ENCODE measurements at regions of chr11 and their contacts with region 1.

Region 1: DNA sequence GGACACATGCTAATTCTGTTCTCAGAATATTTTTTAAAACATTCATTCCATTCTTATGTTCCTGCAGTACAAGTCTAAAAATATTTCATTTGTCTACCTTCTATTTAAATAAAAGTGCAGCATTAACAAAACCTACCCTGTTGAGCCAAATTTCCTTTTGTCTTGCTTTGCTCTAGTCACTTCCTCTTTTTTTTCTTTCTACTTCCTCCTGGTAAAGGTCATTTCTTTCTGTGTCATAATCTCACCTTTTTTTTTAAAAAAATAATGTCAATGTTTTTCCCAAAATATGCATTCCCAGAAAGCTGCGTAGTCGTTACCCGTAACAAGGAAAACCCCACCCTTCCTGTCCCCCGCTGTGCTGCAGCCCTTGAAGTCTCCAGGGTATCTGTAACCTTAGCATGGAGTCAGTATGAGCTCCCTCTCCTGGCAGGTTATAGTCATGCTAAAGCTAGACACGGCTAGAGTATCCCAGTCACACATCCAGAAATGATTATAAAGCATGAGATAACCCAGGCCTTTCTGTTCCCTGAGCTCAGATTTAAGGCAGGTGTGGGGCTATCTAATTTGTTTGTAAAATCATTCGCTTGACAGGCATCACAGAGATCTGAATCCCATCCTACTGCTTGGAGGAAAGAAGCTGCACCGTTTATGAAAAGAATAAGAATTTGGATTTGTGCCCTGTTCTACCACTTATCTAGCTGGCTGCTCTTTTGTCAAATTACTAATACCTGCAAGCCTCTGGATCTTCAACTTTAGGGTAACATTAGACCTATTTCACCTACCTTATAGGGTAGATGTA is 51.1 kb upstream of the EED start:
- DNase-seq: peak; percentile 84
- H3K4me3 ChIP-seq: peak overlapping the region in 1 of 3 experiments; percentile 4
- H3K27ac ChIP-seq: peak overlapping the region; percentile 27
- H3K4me1 ChIP-seq: peaks cover 10% of the 10 kb centered on the region
- H3K27me3 ChIP-seq: no peaks in the 10 kb centered on the region
- CTCF ChIP-seq: peak; percentile 71 to 75
- POLR2A ChIP-seq: no peak

Region 2: GRCh38 chr11:85941380-85941973 is 252.0 kb before region 1 on chr11:
- CTCF ChIA-PET with region 1: interaction called, 8 read pairs
- POLR2A ChIA-PET with region 1: no interaction called
- dilution Hi-C with region 1: no loop called
- intact Hi-C with region 1: loop called (anchors 1 kb)
- DNase-seq: peak; percentile 71
- H3K4me3 ChIP-seq: no peak overlapping the region
- H3K27ac ChIP-seq: no peak overlapping the region
- H3K4me1 ChIP-seq: peaks cover 12% of the 10 kb centered on the region
- H3K27me3 ChIP-seq: no peaks in the 10 kb centered on the region
- CTCF ChIP-seq: peak; percentile 76
- POLR2A ChIP-seq: no peak

Region 3: DNA sequence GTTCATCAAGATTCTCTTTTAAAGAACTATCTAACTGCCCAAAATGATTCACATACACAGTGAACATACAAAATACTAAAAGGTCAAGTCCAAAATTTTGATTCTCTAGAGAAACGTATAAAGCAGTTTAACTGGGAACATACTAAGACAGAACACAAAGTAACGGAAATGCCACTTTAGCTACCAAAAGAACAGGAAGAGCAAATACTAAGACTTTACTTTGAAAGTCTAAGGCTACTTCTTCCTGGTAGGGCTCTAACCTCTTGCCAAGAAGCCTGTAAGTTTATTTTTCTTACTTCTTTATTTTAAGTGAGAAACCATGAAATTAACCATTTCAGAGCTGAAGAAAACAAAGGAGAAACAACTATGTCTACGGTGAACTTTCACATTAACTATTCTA is 130.8 kb before region 1 on chr11:
- CTCF ChIA-PET with region 1: interaction called, 90 read pairs
- POLR2A ChIA-PET with region 1: interaction called, 4 read pairs
- dilution Hi-C with region 1: no loop called
- intact Hi-C with region 1: no loop called
- DNase-seq: peak; percentile 52
- H3K4me3 ChIP-seq: peak overlapping the region in 2 of 3 experiments; percentile 11 to 73
- H3K27ac ChIP-seq: peak overlapping the region; percentile 84
- H3K4me1 ChIP-seq: peaks cover 42% of the 10 kb centered on the region
- H3K27me3 ChIP-seq: no peaks in the 10 kb centered on the region
- CTCF ChIP-seq: no peak
- POLR2A ChIP-seq: no peak

Region 4: GRCh38 chr11:86116386-86116726 is 77.1 kb before region 1 on chr11:
- CTCF ChIA-PET with region 1: interaction called, 13 read pairs
- POLR2A ChIA-PET with region 1: no interaction called
- dilution Hi-C with region 1: no loop called
- intact Hi-C with region 1: no loop called
- DNase-seq: no peak
- H3K4me3 ChIP-seq: no peak overlapping the region
- H3K27ac ChIP-seq: no peak overlapping the region
- H3K4me1 ChIP-seq: no peaks in the 10 kb centered on the region
- H3K27me3 ChIP-seq: no peaks in the 10 kb centered on the region
- CTCF ChIP-seq: no peak
- POLR2A ChIP-seq: no peak

Region 5: GRCh38 chr11:86174101-86175046 is 19.1 kb before region 1 on chr11:
- CTCF ChIA-PET with region 1: interaction called, 42 read pairs
- POLR2A ChIA-PET with region 1: interaction called, 8 read pairs
- dilution Hi-C with region 1: no loop called
- intact Hi-C with region 1: loop called (anchors 1 kb)
- DNase-seq: peak; percentile 100
- H3K4me3 ChIP-seq: no peak overlapping the region
- H3K27ac ChIP-seq: peak overlapping the region; percentile 97
- H3K4me1 ChIP-seq: peaks cover 39% of the 10 kb centered on the region
- H3K27me3 ChIP-seq: no peaks in the 10 kb centered on the region
- CTCF ChIP-seq: no peak
- POLR2A ChIP-seq: no peak

Region 6: GRCh38 chr11:86218125-86219084 is 24.9 kb after region 1 on chr11:
- CTCF ChIA-PET with region 1: interaction called, 26 read pairs
- POLR2A ChIA-PET with region 1: no interaction called
- dilution Hi-C with region 1: no loop called
- intact Hi-C with region 1: no loop called
- DNase-seq: peak; percentile 82
- H3K4me3 ChIP-seq: peak overlapping the region in 1 of 3 experiments; percentile 3
- H3K27ac ChIP-seq: no peak overlapping the region
- H3K4me1 ChIP-seq: no peaks in the 10 kb centered on the region
- H3K27me3 ChIP-seq: peaks cover 1 to 12% of the 10 kb centered on the region in 2 experiments
- CTCF ChIP-seq: peak; percentile 86 to 91
- POLR2A ChIP-seq: no peak